ENCODE measurements at regions of chr16 and their contacts with region 1.

Region 1: GRCh38 chr16:14249291-14250032 is 178.3 kb downstream of the MRTFB start:
- DNase-seq: no peak
- ATAC-seq: peak; percentile 71
- H3K4me3 ChIP-seq: no peak overlapping the region
- H3K27ac ChIP-seq: no peak overlapping the region
- H3K4me1 ChIP-seq: no peaks in the 10 kb centered on the region
- H3K27me3 ChIP-seq: no peaks in the 10 kb centered on the region

Region 2: DNA sequence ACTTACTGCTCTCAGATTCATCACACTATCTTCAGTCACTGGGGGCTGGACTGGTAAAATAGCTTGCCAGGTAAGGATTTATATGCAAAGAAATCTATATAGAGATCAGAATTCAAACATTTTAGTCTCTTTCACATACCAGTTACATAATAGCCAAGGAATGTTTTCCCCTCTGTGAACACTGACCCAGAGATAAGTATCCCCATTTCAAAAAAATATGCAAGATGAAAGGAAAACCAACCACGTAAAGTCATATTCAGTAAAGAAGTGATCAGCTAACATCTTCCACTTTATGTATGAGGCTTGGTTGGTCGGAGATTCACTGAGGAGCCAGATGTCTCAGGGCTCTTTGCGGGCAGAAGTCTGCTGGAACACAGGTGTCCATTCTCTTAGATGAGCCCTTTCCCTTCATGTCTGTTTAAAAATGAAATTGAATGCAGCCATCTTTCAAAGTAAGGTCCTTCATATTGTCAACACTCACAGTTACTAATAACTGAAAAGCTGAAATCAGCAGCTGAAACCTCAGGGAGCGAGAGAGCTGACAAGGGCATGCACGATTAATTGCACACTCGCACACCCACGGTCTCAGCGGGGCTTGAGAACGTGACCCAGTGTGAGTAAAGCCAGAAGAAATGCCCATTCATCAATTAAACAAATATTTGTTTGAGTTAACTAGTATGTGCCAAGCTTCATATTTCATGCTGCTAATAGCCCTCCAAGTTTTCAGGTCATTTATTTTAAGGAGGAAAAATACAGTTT is 17.2 kb before region 1 on chr16:
- intact Hi-C with region 1: no loop called
- DNase-seq: no peak
- ATAC-seq: peak; percentile 52
- H3K4me3 ChIP-seq: peak overlapping the region in 1 of 2 donors; percentile 6
- H3K27ac ChIP-seq: no peak overlapping the region
- H3K4me1 ChIP-seq: no peaks in the 10 kb centered on the region
- H3K27me3 ChIP-seq: no peaks in the 10 kb centered on the region

Region 3: GRCh38 chr16:14285513-14286385 is 36.3 kb after region 1 on chr16:
- intact Hi-C with region 1: loop called in 1 of 2 experiments (anchors 5 kb)
- DNase-seq: peak; percentile 93 to 98
- ATAC-seq: peak; percentile 96
- H3K4me3 ChIP-seq: peak overlapping the region; percentile 32 to 93
- H3K27ac ChIP-seq: peak overlapping the region in 1 of 2 donors; percentile 47
- H3K4me1 ChIP-seq: no peaks in the 10 kb centered on the region
- H3K27me3 ChIP-seq: no peaks in the 10 kb centered on the region

Region 4: DNA sequence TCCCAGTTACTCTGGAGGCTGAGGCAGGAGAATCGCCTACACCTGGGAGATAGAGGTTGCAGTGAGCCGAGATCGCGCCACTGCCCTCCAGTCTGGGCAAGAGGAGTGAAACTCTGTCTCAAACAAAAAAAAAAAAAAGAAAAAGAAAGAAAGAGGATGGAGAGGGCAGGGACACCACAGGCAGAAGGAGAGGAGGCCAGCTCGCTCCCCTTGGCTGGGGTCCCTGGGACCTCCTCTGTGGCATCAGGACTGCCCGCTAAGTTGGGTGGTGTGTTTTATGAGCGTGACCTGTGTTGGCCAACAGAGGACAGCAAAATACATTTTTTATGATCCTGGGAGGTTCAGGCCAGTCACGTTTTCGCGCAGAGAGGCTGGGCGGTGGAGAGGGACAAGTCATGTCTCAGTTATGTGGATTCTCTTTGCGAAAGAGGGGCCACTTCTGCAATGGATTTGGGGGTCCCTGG is 51.3 kb after region 1 on chr16:
- intact Hi-C with region 1: no loop called
- DNase-seq: peak; percentile 80 to 89
- ATAC-seq: peak; percentile 80
- H3K4me3 ChIP-seq: no peak overlapping the region
- H3K27ac ChIP-seq: peak overlapping the region in 1 of 2 donors; percentile 31
- H3K4me1 ChIP-seq: peaks cover 0 to 1% of the 10 kb centered on the region in 2 donors
- H3K27me3 ChIP-seq: no peaks in the 10 kb centered on the region

Region 5: GRCh38 chr16:14529010-14529669 is 279.7 kb after region 1 on chr16:
- intact Hi-C with region 1: loop called (anchors 1 to 2 kb)
- DNase-seq: peak; percentile 76 to 85
- ATAC-seq: peak; percentile 91
- H3K4me3 ChIP-seq: peak overlapping the region; percentile 29 to 66
- H3K27ac ChIP-seq: no peak overlapping the region
- H3K4me1 ChIP-seq: peaks cover 2 to 4% of the 10 kb centered on the region in 2 donors
- H3K27me3 ChIP-seq: no peaks in the 10 kb centered on the region

Region 6: GRCh38 chr16:14586637-14587305 is 337.3 kb after region 1 on chr16:
- intact Hi-C with region 1: no loop called
- DNase-seq: no peak
- ATAC-seq: no peak
- H3K4me3 ChIP-seq: no peak overlapping the region
- H3K27ac ChIP-seq: no peak overlapping the region
- H3K4me1 ChIP-seq: no peaks in the 10 kb centered on the region
- H3K27me3 ChIP-seq: no peaks in the 10 kb centered on the region

Region 7: GRCh38 chr16:14600164-14600563 is 350.7 kb after region 1 on chr16:
- intact Hi-C with region 1: loop called in 1 of 2 experiments (anchors 5 kb)
- DNase-seq: no peak
- ATAC-seq: no peak
- H3K4me3 ChIP-seq: no peak overlapping the region
- H3K27ac ChIP-seq: no peak overlapping the region
- H3K4me1 ChIP-seq: no peaks in the 10 kb centered on the region
- H3K27me3 ChIP-seq: no peaks in the 10 kb centered on the region